Posterior vena cava (tissue), 2 donors: ENCODE measurements at regions of chr19 and their contacts with region 1.

Region 1: GRCh38 chr19:15498911-15499317 is 9.4 kb upstream of the CYP4F22 start:
- DNase-seq: no peak

Region 2: DNA sequence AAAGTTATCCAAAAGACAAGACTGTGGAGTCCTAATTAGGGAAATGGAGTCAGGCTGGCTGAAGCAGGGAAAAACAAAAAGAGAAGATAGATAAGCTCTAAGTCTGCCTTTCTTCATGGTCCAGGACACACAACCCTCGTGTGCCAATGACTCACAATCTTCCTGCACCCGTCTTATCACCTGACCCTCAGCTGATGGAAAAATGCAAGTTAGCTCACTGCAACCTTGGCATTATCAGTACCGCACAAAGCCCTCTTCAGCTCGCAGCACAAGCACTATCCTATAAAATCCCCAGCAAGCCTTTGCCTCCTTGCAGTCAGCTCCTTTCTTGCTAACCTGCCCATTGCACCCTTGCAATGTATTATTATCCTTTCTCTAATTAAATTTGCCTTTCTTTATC is 668.2 kb before region 1 on chr19:
- intact Hi-C with region 1: no loop called
- DNase-seq: no peak

Region 3: DNA sequence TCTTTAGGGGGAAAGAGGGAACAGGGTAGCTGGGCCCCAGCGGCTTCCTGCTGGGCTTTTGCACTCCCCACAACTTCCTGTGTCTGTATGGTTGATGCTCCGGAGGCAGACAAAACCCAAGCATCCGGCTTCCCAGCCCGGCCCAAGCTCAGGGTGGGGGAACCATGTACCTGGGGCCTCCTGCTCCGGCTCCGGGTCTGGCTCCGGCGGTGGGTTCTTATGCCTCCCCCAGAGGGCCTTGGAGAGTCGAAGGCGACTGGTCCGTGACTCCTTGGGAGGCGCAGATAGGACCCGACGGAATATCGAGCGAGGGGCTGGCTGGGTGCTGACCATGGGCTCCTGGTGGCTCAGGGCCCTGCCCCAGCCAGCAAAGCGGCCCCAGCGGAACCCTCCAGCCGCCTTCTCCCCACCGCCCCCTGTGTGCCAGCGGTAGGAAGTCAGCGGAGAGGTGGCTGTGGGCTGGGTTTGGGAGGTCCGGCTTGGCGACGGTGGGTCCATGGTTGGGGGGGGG is 35.0 kb before region 1 on chr19:
- intact Hi-C with region 1: no loop called
- DNase-seq: no peak

Region 4: DNA sequence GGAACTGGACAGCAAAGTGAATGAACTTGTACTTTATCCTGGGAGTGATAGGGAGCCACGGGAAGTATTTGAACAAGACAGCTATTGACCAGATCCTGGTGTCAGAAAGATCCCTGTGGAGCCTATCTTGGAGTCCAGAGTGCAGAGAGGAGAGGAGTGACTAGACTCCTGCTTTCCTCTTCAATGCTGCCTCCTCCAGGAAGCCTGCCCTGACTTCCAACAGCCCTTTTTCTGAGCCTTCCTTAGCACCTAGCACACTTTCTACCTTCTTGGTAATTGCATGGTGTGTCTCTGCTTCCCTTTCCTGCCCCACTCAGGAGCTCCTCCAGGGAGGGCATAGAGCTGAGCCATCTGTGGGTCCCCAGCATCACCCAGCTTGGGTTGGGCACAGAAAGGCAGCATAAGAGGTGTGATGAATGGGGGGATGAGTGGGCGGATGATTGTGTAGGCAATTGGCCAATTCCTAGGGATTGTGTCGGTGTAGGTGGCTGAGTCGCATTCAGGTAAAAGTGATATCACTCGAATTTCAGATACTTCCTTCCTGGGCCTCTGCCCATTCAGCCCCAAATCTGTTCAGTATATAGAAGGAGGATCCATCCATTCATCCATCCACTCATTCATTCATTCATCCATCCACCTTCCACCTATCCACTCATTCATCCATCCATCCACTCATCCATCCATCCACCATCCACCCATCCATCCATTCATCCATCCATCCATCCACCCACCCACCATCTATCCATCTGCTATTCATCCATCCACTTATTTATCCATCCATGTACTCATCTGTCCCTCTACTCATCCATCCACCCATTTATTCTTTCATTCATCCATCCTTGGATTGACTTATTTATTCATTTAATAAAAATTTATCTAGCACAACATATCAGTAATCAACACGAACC is 36.3 kb after region 1 on chr19:
- intact Hi-C with region 1: loop called in 1 of 2 experiments (anchors 1 kb)
- DNase-seq: no peak